ENCODE measurements at regions of chr12 and their contacts with region 1.

Region 1: DNA sequence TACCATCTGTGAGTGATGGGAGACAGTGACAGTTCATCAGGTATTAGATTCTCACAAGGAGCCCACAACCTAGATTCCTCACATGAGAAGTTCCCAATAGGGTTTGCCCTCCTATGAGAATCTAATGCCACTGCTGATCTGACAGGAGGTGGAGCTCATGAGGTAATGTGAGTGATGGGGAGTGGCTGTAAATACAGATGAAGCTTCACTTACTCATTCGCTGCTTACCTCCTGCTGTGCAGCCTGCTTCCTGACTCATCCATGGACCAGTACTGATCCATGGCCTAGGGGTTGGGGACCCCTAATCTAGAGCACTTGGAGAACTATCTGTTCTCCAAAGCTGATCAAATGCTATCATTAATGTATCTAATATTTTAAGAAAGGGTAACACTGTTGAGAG is 17.7 kb downstream of the CLEC2D start:
- DNase-seq: no peak
- ATAC-seq: no peak
- H3K4me3 ChIP-seq: no peak overlapping the region
- H3K4me3 Mint-ChIP-seq: no peak overlapping the region
- H3K27ac ChIP-seq: peak overlapping the region in 1 of 2 donors; percentile 67
- H3K27ac Mint-ChIP-seq: no peak overlapping the region
- H3K4me1 ChIP-seq: peaks cover 33 to 44% of the 10 kb centered on the region in 2 donors
- H3K4me1 Mint-ChIP-seq: peaks cover 52% of the 10 kb centered on the region
- H3K27me3 ChIP-seq: no peaks in the 10 kb centered on the region
- H3K27me3 Mint-ChIP-seq: no peaks in the 10 kb centered on the region
- CTCF ChIP-seq: no peak

Region 2: DNA sequence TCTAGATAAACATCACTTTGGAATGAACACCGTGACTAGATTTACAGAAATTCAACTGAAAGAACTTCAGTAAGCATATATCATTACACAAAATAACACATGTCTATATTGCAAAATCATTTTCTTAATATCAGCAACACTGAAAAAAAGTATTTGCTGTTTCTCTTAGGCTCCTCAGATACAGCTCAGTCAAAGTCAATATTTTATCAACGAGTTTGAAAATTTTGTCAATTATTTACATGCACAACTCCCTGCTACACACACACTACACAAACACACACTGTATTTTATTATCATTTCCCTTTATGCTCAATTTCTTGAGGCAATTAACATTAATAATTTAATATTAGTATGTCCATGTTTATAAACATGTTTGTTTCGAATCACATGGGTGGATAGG is 482.8 kb before region 1 on chr12:
- CTCF ChIA-PET with region 1: no interaction called
- POLR2A ChIA-PET with region 1: no interaction called
- intact Hi-C with region 1: no loop called
- DNase-seq: no peak
- ATAC-seq: no peak
- H3K4me3 ChIP-seq: no peak overlapping the region
- H3K4me3 Mint-ChIP-seq: no peak overlapping the region
- H3K27ac ChIP-seq: no peak overlapping the region
- H3K27ac Mint-ChIP-seq: no peak overlapping the region
- H3K4me1 ChIP-seq: no peaks in the 10 kb centered on the region
- H3K4me1 Mint-ChIP-seq: no peaks in the 10 kb centered on the region
- H3K27me3 ChIP-seq: no peaks in the 10 kb centered on the region
- H3K27me3 Mint-ChIP-seq: peaks cover 8% of the 10 kb centered on the region
- CTCF ChIP-seq: no peak

Region 3: DNA sequence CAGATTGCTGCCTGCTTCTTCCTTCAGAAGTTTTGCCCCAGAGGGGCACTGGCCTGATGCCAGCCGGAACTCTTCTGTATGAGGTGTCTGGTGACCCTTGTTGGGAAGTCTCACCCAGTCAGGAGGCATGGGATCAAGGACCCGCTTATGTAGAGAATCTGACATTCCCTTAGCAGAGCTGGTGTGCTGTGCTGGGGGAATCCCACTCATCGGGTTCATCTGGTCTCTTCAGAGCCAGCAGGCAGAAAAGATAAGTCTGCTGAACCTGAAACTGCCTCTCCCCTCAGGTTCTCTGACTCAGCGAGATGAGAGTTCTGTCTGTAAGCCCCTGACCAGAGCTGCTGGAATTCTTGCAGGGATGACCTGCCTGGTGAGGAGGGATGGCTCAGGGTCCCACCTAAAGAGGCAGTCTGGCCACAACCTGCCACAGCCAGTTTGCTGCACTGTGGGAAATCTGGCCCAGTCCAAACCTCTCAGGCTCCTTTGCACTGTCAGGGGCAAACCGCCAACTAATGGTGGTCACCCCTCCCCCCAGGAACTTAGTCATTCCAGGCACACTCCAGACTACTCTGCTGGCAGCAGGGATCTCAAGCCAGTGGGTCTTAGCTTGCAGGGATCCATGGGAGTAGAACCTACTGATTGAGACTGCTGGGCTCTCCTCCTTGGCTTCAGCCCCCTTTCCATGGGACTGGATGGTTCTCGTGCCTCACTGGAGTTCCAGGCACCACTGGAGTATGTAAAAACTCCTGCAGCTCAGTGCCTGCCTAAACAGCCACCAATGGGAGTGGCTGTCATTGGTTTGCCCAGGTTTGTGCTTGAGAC is 13.6 kb before region 1 on chr12:
- CTCF ChIA-PET with region 1: interaction called, 5 read pairs
- POLR2A ChIA-PET with region 1: interaction called, 4 read pairs
- intact Hi-C with region 1: loop called (anchors 2 kb)
- DNase-seq: peak; percentile 56
- ATAC-seq: peak; percentile 32
- H3K4me3 ChIP-seq: peak overlapping the region in 3 of 5 experiments; percentile 63 to 77 (median 69)
- H3K4me3 Mint-ChIP-seq: peak overlapping the region; percentile 91
- H3K27ac ChIP-seq: peak overlapping the region; percentile 28 to 87
- H3K27ac Mint-ChIP-seq: peak overlapping the region; percentile 86
- H3K4me1 ChIP-seq: peaks cover 60 to 70% of the 10 kb centered on the region in 2 donors
- H3K4me1 Mint-ChIP-seq: peaks cover 77% of the 10 kb centered on the region
- H3K27me3 ChIP-seq: no peaks in the 10 kb centered on the region
- H3K27me3 Mint-ChIP-seq: no peaks in the 10 kb centered on the region
- CTCF ChIP-seq: no peak

Region 4: DNA sequence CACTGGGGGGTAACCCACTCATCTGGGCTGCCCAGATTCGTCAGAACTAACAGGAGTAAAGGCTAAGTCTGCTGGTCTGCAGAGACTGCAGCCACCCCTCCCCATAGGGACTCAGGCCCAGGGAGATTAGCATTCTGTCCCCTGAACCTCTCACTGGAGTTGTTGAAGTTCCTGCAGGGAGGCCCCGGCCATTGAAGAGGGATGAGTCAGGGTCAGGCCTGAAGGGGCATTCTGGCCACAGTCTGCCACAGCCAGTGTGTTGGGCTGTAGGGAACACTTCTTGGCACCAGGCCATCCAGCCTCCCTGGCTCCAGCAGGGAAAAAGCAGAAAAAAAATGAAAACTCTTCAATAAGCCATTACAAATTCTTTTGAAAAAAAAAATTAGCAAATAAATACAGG is 667.3 kb after region 1 on chr12:
- CTCF ChIA-PET with region 1: no interaction called
- POLR2A ChIA-PET with region 1: no interaction called
- intact Hi-C with region 1: no loop called
- DNase-seq: no peak
- ATAC-seq: no peak
- H3K4me3 ChIP-seq: no peak overlapping the region
- H3K4me3 Mint-ChIP-seq: no peak overlapping the region
- H3K27ac ChIP-seq: no peak overlapping the region
- H3K27ac Mint-ChIP-seq: no peak overlapping the region
- H3K4me1 ChIP-seq: no peaks in the 10 kb centered on the region
- H3K4me1 Mint-ChIP-seq: no peaks in the 10 kb centered on the region
- H3K27me3 ChIP-seq: peaks cover 0 to 6% (median 0%) of the 10 kb centered on the region in 4 experiments
- H3K27me3 Mint-ChIP-seq: peaks cover 24% of the 10 kb centered on the region
- CTCF ChIP-seq: no peak

Measured in B cell (primary cell).